Activated CD4-positive, alpha-beta T cell treated with anti-CD3 and anti-CD28 coated beads, Interleukin-2, amount 10 ng/mL, durations not matched to agents 7 days and 5 days (primary cell): ENCODE measurements at regions of chr22 and their contacts with region 1.

Region 1: GRCh38 chr22:24230911-24231656 is 13.8 kb downstream of the GGT5 start:
- DNase-seq: peak; percentile 68
- H3K4me3 Mint-ChIP-seq: no peak overlapping the region
- H3K27ac Mint-ChIP-seq: peak overlapping the region; percentile 72
- H3K4me1 Mint-ChIP-seq: peaks cover 3% of the 10 kb centered on the region
- H3K27me3 Mint-ChIP-seq: no peaks in the 10 kb centered on the region

Region 2: DNA sequence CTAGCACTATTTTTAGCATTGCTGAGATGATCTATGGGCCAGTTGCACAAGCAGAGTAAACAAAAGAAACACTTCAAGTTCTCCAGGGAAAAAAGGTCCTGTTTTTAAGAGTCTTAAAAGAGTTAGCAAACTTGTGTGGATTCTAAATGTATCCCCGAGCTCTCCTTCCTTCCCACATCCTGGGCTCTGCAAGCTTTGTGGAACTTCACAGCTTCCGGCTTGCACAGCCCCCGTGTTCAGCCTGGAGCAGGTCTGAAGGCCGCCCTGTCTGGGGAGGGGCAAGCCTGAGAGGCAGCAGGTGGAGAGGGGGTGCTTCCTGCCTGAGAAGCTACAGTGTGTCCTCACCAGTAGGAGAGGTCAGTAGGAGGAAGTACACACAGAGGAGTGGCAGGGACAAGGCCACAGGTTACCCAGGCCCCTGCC is 84.9 kb before region 1 on chr22:
- CTCF ChIA-PET with region 1: no interaction called
- POLR2A ChIA-PET with region 1: no interaction called
- DNase-seq: peak; percentile 49
- H3K4me3 Mint-ChIP-seq: peak overlapping the region; percentile 23
- H3K27ac Mint-ChIP-seq: peak overlapping the region; percentile 77
- H3K4me1 Mint-ChIP-seq: peaks cover 61% of the 10 kb centered on the region
- H3K27me3 Mint-ChIP-seq: no peaks in the 10 kb centered on the region

Region 3: DNA sequence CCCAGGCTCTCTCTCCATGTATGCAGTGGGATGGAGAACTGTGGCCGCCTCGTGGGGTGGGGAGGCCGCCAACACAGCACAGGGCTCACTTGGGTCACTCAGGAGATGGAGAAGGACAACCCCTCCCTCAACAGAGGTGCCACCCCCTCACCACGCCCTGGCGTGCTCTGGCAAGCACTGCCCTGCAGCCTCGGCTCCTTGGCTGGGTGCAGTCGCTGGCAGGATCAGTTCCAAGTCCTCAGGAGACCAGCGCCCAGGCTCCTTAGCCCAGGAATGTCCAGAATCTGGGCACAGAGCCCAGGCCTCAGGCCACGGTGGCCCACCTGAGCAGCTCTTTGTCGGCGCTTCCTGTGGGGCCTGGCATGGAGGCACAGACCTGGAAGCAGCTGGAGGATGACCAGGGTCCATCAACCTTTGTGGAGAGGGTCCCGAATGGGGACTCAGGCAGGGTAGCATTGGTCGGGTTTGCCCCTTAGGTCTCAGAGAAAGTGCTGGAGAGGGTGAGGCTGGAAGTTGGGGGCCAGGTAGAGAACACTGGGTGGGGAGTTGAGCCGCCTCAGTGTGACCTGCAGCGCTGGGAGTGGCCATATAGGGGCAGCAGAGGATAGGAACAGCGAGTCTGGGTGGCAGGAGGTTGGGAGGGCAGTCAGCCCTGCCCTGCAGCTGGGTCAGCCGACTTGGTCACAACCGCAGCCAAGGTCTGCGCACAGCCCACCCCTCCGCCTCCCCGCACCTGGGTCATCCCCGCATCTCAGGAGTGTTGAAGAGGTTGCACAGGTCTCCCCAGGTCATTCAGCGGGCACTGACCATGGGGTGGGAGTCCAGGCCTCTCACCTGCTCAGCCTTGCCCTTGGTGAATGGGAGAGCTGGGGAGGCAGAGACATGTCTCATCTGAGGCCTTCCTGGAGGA is 41.6 kb before region 1 on chr22:
- CTCF ChIA-PET with region 1: interaction called, 19 read pairs
- POLR2A ChIA-PET with region 1: no interaction called
- DNase-seq: peak; percentile 61
- H3K4me3 Mint-ChIP-seq: no peak overlapping the region
- H3K27ac Mint-ChIP-seq: peak overlapping the region; percentile 64
- H3K4me1 Mint-ChIP-seq: peaks cover 8% of the 10 kb centered on the region
- H3K27me3 Mint-ChIP-seq: no peaks in the 10 kb centered on the region

Region 4: DNA sequence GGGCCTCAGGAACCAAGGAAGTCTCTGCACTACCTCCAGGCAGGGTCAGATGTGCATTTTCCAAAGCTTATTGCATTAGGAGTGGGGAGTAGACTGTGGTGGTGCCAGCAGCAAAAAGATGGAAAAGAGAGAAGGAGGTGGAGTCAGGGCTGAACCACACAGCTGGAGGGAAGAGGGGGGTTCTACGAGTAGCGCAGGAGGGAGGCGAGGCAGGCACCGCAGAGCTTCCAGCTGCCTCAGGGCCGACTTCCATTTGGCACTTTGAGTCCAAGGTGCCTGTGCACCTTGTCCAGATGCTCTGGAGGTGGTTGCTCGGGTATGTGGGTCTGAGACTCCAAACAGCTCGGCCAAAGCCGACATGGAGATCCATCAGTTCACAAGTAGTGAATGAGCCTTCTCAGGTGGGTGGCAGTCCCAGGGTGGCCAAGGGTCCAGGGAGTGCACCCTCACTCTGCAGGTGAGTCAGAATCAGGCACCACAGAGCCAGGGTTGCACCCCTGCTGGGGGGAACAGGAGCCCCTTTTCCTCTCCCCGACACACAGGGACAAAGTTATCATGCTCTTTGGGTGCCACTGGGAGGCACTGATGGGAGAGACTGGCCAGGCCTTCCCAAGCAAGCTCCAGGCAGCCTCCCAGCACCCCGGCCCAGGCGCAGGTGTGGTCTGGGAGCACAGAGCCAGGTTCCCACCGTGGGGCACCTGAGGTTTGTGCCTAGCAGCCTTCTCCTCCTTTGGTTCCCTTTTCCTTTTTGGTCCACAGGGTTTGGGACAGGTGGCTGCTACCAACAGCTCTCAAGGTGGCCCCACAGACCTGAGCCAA is 16.4 kb before region 1 on chr22:
- CTCF ChIA-PET with region 1: interaction called, 15 read pairs
- POLR2A ChIA-PET with region 1: no interaction called
- DNase-seq: no peak
- H3K4me3 Mint-ChIP-seq: no peak overlapping the region
- H3K27ac Mint-ChIP-seq: no peak overlapping the region
- H3K4me1 Mint-ChIP-seq: no peaks in the 10 kb centered on the region
- H3K27me3 Mint-ChIP-seq: peaks cover 3% of the 10 kb centered on the region

Region 5: GRCh38 chr22:24244101-24244787 is 13.2 kb after region 1 on chr22:
- CTCF ChIA-PET with region 1: interaction called, 24 read pairs
- POLR2A ChIA-PET with region 1: no interaction called
- DNase-seq: no peak
- H3K4me3 Mint-ChIP-seq: no peak overlapping the region
- H3K27ac Mint-ChIP-seq: peak overlapping the region; percentile 72
- H3K4me1 Mint-ChIP-seq: peaks cover 44% of the 10 kb centered on the region
- H3K27me3 Mint-ChIP-seq: no peaks in the 10 kb centered on the region

Region 6: DNA sequence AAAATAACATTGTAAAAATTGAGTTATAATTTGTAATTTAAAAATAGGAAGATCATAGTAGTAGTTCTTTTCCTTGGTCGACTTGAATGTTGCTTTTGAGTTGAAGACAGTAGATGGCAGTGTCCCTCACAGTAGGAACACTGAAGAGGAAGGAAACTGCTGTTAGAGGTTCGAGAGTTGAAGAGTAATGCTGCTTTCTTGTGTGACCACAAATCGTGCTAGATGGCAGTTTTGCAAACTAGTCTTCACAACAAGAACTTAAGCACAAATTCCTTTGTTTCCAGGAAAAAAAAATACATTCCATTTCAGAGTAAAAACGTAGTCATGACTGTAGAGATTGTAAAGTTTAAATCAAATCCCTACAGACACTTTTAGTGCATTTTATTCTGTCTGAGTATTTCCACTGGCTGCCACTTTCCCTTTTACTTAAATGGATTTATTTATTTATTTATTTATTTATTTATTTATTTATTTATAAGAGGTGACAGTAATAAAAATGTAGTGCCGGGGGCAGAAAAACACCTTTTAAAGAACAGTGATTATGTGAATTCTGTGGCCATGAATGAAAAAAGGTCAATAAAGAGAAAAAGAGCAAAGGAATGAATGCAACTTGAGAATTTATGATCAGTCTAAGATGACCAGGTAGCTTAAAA is 94.1 kb after region 1 on chr22:
- CTCF ChIA-PET with region 1: no interaction called
- POLR2A ChIA-PET with region 1: no interaction called
- DNase-seq: peak; percentile 61
- H3K4me3 Mint-ChIP-seq: peak overlapping the region; percentile 28
- H3K27ac Mint-ChIP-seq: no peak overlapping the region
- H3K4me1 Mint-ChIP-seq: peaks cover 44% of the 10 kb centered on the region
- H3K27me3 Mint-ChIP-seq: no peaks in the 10 kb centered on the region